ENCODE measurements at regions of chr11 and their contacts with region 1.

Region 1: DNA sequence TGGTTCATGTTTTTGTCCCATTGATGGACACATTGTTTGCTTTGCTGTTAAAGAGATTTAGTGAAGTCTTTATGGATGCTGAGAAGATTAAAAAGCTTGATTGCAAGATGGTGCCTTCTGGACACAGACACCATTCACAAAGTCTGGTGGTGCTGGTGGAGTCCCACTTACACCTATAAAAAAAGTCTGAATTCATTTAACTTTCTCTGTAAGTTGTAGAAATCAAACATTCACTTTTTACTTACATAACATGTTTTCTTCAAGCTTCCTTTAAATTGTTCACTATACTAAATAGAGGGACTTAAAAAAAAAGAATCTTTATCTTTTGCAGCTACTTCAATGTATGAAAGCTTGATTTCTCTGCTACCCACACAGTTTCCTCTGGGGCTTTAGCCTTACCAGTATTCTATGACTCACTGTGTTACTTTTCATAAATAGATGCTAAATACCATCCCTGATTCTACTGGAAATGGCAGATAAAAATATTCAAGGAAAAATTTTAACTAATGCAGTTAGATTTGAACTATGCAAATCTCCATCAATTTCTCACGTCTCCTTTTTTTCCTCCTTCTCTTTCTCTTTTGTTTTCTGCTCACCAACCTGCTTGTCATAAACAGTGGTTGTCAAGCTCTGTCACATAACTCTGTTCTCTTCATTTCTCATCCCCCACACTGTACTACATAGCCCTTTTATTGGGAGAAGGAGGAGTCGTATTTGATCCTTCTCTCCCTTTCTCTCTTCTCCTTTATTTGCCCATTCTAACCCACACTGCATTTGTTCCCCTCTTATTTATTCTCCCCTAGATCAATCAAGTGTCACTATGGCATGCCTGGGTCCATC is 89.7 kb downstream of the FAM76B start:
- DNase-seq: no peak
- H3K4me3 ChIP-seq: no peak overlapping the region
- H3K27ac ChIP-seq: peak overlapping the region in 58 of 59 donors; percentile 29 to 93 (median 78)
- H3K27me3 ChIP-seq: no peaks in the 10 kb centered on the region
- CTCF ChIP-seq: no peak

Region 2: GRCh38 chr11:95074806-95075563 is 624.9 kb before region 1 on chr11:
- intact Hi-C with region 1: loop called in 1 of 2 experiments (anchors 5 kb)
- DNase-seq: peak in 1 of 10 donors; percentile 50
- H3K4me3 ChIP-seq: peak overlapping the region in 27 of 59 donors; percentile 0 to 45 (median 23)
- H3K27ac ChIP-seq: peak overlapping the region in 54 of 59 donors; percentile 3 to 84 (median 64)
- H3K27me3 ChIP-seq: no peaks in the 10 kb centered on the region
- CTCF ChIP-seq: no peak

Region 3: GRCh38 chr11:95435628-95436353 is 264.1 kb before region 1 on chr11:
- intact Hi-C with region 1: loop called in 1 of 2 experiments (anchors 10 kb)
- DNase-seq: no peak
- H3K4me3 ChIP-seq: no peak overlapping the region
- H3K27ac ChIP-seq: peak overlapping the region in 15 of 59 donors; percentile 1 to 66 (median 35)
- H3K27me3 ChIP-seq: no peaks in the 10 kb centered on the region
- CTCF ChIP-seq: no peak

Region 4: GRCh38 chr11:95577716-95578460 is 122.0 kb before region 1 on chr11:
- intact Hi-C with region 1: loop called (anchors 5 to 10 kb)
- DNase-seq: no peak
- H3K4me3 ChIP-seq: no peak overlapping the region
- H3K27ac ChIP-seq: peak overlapping the region in 1 of 59 donors; percentile 55
- H3K27me3 ChIP-seq: no peaks in the 10 kb centered on the region
- CTCF ChIP-seq: peak in 5 of 56 donors; percentile 8 to 34 (median 15)

Region 5: GRCh38 chr11:95715777-95716241 is 16.0 kb after region 1 on chr11:
- intact Hi-C with region 1: no loop called
- DNase-seq: peak in 6 of 10 donors; percentile 13 to 65 (median 43)
- H3K4me3 ChIP-seq: peak overlapping the region in 2 of 59 donors; percentile 27 to 32
- H3K27ac ChIP-seq: peak overlapping the region in 42 of 59 donors; percentile 2 to 77 (median 51)
- H3K27me3 ChIP-seq: no peaks in the 10 kb centered on the region
- CTCF ChIP-seq: no peak

Measured in dorsolateral prefrontal cortex (tissue), 120 donors.